Heart left ventricle (tissue), 16 donors: ENCODE measurements at regions of chr5 and their contacts with region 1.

Region 1: DNA sequence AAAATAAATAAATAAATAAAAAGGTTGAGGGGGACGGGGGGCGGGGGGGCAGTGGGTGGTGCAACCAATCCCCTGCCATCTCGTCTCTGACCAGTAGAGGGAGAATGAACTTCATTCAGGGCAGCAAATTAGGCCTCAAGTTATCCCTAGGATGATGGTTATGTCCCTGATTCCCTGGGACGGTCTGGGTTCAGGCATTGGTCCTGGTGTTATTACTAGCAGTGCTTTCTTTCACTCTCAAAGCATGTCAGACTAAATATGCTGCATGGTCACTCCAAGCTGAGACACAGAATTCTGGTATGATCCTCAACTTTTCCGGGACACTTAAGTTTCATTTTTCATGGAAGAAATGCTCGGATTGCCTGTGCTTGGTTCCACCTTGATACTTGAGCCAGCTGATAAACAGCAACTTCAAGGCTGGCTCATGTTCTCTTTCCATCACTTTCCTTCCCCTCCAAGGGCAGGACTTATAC is 59.4 kb downstream of the DAP start:
- DNase-seq: peak in 1 of 5 donors; percentile 40
- ATAC-seq: peak in 3 of 4 donors; percentile 29 to 54 (median 43)
- H3K4me3 ChIP-seq: no peak overlapping the region
- H3K27ac ChIP-seq: peak overlapping the region in 5 of 12 donors; percentile 3 to 58 (median 9)
- H3K4me1 ChIP-seq: peaks cover 0 to 46% (median 33%) of the 10 kb centered on the region in 12 donors
- H3K27me3 ChIP-seq: no peaks in the 10 kb centered on the region
- CTCF ChIP-seq: peak; percentile 56 to 79 (median 75)
- POLR2A ChIP-seq: no peak

Region 2: DNA sequence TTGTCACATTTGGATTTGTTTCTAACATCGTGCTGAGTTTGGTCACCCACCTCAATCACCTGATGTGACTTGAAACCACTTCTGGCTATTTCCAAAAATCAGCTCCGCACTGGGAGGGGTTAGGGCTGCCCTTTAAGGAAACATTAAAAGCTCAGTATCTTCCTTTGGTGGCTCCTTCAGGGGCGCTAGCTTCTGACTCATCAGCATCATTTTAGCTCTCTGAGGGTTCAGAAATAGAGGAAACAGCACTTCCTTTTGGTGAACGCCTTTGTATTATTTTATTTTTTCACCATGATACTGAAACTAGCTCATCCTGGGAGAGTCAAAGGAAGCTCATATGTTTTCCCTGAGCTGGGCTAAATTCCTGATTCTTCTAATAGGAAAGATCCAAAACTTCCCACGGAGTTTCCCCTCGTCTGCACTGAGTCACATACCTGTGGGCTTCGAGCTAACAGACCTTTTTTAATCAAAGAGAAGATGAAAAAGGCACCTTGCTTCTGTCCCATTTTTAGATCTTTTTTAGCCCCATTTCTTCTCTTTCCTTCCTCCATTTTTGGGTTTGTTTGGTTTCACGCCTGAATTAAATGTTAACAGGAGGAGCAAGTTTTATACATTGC is 211.7 kb before region 1 on chr5:
- intact Hi-C with region 1: no loop called
- DNase-seq: no peak
- ATAC-seq: peak in 3 of 4 donors; percentile 26 to 66 (median 44)
- H3K4me3 ChIP-seq: no peak overlapping the region
- H3K27ac ChIP-seq: peak overlapping the region in 2 of 12 donors; percentile 8 to 40
- H3K4me1 ChIP-seq: peaks cover 0 to 43% (median 21%) of the 10 kb centered on the region in 12 donors
- H3K27me3 ChIP-seq: no peaks in the 10 kb centered on the region
- CTCF ChIP-seq: no peak
- POLR2A ChIP-seq: no peak

Region 3: DNA sequence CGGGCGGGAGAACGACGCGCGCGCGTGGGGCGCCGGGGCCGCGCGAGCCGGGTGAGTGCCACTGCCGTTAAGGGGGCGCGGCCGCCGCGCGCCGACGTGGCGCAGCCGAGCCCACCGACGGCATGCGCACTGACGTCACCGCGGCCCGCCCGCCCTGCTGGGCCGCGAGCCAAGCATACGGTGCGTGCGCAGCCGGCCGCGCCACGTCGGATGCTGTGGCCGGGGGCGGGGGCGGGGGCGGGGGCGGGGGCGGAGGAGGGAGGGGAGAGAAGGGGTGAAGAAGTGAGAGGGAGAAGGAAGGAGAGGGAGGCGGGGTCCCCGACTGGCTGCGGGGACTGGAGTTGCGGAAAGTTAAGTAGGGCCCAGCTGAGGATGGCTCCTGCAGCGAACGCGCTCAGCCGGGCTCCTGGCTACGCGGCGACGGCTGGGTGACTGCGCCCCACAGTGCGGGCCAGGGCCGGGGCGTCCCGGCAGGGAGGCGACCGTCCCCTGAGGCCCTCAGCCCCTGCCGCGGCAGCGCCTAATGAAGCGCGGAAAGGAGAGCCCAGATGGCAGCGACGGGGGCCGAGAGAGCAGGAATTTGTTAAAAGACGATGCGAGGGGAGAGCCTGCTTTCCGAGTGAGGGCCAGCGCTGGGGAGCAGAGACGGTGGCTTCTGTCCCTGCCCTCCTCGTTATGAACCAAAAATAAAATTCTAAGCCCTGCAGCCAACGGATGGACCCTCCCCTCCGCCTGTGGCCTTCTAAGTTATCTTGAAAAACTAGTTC is 59.7 kb after region 1 on chr5 and contains the start of gene DAP:
- intact Hi-C with region 1: loop called in 4 of 10 experiments (anchors 2 to 10 kb)
- DNase-seq: peak; percentile 85 to 94 (median 91)
- ATAC-seq: peak; percentile 65 to 94 (median 86)
- H3K4me3 ChIP-seq: peak within 1 kb of the TSS; percentile 59 to 95 (median 75)
- H3K27ac ChIP-seq: peak within 1 kb of the TSS; percentile 83 to 99 (median 95)
- H3K4me1 ChIP-seq: peaks cover 0 to 51% (median 29%) of the 10 kb centered on the region in 12 donors
- H3K27me3 ChIP-seq: no peaks in the 10 kb centered on the region
- CTCF ChIP-seq: no peak
- POLR2A ChIP-seq: peak in 1 of 2 donors; percentile 42
- total RNA-seq, gene DAP: 24.3 to 61.6 (median 28.5) TPM

Region 4: GRCh38 chr5:10856683-10857337 is 155.2 kb after region 1 on chr5:
- intact Hi-C with region 1: loop called in 7 of 10 experiments (anchors 2 to 10 kb)
- DNase-seq: peak; percentile 40 to 70 (median 52)
- ATAC-seq: peak in 3 of 4 donors; percentile 36 to 77 (median 61)
- H3K4me3 ChIP-seq: peak overlapping the region in 5 of 12 donors; percentile 0 to 38 (median 6)
- H3K27ac ChIP-seq: no peak overlapping the region
- H3K4me1 ChIP-seq: peaks cover 0 to 33% (median 7%) of the 10 kb centered on the region in 12 donors
- H3K27me3 ChIP-seq: peaks cover 0 to 9% (median 0%) of the 10 kb centered on the region in 9 donors
- CTCF ChIP-seq: peak; percentile 69 to 85 (median 78)
- POLR2A ChIP-seq: no peak

Region 5: GRCh38 chr5:10863763-10864383 is 162.3 kb after region 1 on chr5:
- intact Hi-C with region 1: loop called in 5 of 10 experiments (anchors 5 to 10 kb)
- DNase-seq: peak in 3 of 5 donors; percentile 24 to 44 (median 34)
- ATAC-seq: peak in 3 of 4 donors; percentile 56 to 74 (median 67)
- H3K4me3 ChIP-seq: no peak overlapping the region
- H3K27ac ChIP-seq: no peak overlapping the region
- H3K4me1 ChIP-seq: no peaks in the 10 kb centered on the region
- H3K27me3 ChIP-seq: peaks cover 0 to 1% (median 0%) of the 10 kb centered on the region in 9 donors
- CTCF ChIP-seq: peak; percentile 48 to 90 (median 72)
- POLR2A ChIP-seq: no peak

Region 6: GRCh38 chr5:10987930-10988504 is 286.4 kb after region 1 on chr5:
- intact Hi-C with region 1: loop called in 5 of 10 experiments (anchors 5 to 10 kb)
- DNase-seq: peak; percentile 69 to 85 (median 79)
- ATAC-seq: peak; percentile 86 to 89 (median 88)
- H3K4me3 ChIP-seq: no peak overlapping the region
- H3K27ac ChIP-seq: peak overlapping the region in 5 of 12 donors; percentile 10 to 84 (median 75)
- H3K4me1 ChIP-seq: peaks cover 0 to 24% (median 4%) of the 10 kb centered on the region in 12 donors
- H3K27me3 ChIP-seq: peaks cover 0 to 11% (median 0%) of the 10 kb centered on the region in 9 donors
- CTCF ChIP-seq: peak; percentile 48 to 78 (median 70)
- POLR2A ChIP-seq: no peak

Region 7: GRCh38 chr5:12023614-12024241 is 1322.1 kb after region 1 on chr5:
- intact Hi-C with region 1: loop called in 3 of 10 experiments (anchors 5 to 10 kb)
- DNase-seq: no peak
- ATAC-seq: no peak
- H3K4me3 ChIP-seq: no peak overlapping the region
- H3K27ac ChIP-seq: no peak overlapping the region
- H3K4me1 ChIP-seq: no peaks in the 10 kb centered on the region
- H3K27me3 ChIP-seq: no peaks in the 10 kb centered on the region
- CTCF ChIP-seq: peak; percentile 35 to 68 (median 50)
- POLR2A ChIP-seq: no peak